Posterior vena cava (tissue), 2 donors: ENCODE measurements at regions of chr15 and their contacts with region 1.

Region 1: DNA sequence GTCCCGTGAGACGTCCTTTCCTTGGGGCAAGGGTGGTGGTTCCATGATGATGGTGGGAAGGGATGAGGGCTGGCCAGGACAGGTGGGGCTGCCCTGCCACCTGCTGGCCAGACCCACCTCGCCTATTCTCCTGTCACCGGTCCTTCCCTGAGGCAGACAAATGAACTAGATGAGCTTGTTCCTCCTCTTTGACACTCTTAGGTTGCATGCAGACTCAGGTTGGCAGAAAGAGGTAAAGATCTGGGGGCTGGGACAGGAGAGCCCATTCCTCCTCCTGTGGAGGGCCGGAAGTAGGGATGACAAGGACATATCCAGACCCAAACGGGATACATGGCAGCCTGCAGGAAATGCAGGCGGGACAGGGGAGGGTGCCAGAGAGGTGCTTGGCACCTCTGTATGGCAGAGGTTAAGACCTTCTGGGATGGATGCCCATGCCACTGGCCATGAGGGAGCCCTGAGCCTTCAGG is 38.6 kb downstream of the ACSBG1 start:
- DNase-seq: peak; percentile 73

Region 2: GRCh38 chr15:78120523-78120922 is 75.2 kb before region 1 on chr15:
- intact Hi-C with region 1: loop called in 1 of 2 experiments (anchors 5 kb)
- DNase-seq: no peak

Region 3: GRCh38 chr15:78131295-78132061 is 64.3 kb before region 1 on chr15 and contains the start of gene CIB2:
- intact Hi-C with region 1: loop called in 1 of 2 experiments (anchors 5 kb)
- DNase-seq: peak; percentile 89
- total RNA-seq, gene CIB2: 5.1 to 6.7 TPM

Region 4: GRCh38 chr15:78234515-78235040 is 38.8 kb after region 1 on chr15 and contains the start of gene ACSBG1:
- intact Hi-C with region 1: loop called in 1 of 2 experiments (anchors 5 kb)
- DNase-seq: no peak
- total RNA-seq, gene ACSBG1: not detected